ENCODE measurements at regions of chr9 and their contacts with region 1.

Region 1: DNA sequence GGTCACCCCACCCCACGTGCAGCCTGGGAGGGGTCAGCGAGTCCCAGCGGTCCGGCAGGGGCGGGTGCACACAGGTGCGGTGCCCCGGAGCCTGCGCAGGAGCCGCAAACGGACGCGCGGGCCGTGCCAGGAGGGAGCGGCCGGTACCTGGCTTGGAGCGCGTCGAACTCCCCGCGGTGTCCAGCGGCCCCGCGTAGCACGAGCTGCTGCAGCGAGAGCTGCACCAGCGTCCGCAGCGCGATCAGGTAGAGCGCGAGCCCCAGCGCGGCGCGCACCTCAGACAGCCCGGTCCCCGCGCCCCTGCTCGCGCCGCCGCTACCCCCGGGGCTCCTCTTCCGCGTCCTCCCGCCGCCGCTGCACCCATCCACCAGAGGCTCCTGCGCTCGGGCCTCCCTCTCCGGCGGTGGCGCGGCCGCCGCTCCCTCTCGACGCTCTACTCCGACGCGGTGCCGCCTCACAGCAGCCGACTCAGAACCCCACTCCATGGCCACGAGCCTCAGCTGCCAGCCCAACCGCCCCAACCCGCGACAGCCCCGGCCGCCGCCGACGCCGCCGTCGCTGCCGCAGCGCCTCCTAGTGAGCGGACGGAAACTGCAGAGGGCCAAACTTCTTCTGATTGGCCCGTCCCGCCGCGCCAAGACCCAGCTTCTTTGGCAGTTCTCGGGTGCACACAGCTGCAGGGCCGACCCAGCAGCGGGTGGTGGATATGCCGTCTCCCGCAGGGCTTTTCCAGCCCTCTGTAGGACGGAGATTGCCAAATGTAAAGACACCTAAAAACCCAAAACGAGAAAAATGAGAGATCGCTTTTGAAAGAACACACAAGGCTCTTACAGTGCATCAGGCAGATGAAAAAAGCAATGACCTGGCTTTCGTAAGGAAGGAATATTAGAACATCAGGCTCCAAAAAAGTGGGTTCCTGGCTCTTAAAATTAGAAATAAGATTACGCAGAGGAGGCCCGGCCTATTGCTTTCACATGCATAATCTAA is at the start of gene ERMP1:
- DNase-seq: peak; percentile 85
- total RNA-seq, gene ERMP1: 9.8 and 19.3 TPM in 2 replicates

Region 2: DNA sequence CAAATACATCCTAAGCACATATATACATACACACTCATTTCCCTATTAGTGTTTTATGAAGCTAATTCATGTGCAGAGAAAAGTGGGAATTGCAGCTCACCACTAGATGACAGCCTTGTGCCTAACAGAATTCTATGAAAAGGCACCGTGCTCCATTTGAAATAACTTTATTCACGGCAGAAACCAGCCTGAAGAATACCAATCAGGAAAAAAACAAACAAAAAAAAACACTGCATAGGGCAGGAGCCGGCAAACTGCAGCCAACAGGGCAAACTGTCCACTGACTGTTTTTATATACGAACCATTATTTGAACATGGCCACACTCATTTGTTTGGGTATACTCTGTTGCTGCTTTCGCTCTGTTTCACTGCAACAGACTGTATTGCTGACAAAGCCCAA is 33.5 kb before region 1 on chr9:
- in situ Hi-C with region 1: loop called (anchors 5 kb)
- DNase-seq: peak; percentile 66

Region 3: DNA sequence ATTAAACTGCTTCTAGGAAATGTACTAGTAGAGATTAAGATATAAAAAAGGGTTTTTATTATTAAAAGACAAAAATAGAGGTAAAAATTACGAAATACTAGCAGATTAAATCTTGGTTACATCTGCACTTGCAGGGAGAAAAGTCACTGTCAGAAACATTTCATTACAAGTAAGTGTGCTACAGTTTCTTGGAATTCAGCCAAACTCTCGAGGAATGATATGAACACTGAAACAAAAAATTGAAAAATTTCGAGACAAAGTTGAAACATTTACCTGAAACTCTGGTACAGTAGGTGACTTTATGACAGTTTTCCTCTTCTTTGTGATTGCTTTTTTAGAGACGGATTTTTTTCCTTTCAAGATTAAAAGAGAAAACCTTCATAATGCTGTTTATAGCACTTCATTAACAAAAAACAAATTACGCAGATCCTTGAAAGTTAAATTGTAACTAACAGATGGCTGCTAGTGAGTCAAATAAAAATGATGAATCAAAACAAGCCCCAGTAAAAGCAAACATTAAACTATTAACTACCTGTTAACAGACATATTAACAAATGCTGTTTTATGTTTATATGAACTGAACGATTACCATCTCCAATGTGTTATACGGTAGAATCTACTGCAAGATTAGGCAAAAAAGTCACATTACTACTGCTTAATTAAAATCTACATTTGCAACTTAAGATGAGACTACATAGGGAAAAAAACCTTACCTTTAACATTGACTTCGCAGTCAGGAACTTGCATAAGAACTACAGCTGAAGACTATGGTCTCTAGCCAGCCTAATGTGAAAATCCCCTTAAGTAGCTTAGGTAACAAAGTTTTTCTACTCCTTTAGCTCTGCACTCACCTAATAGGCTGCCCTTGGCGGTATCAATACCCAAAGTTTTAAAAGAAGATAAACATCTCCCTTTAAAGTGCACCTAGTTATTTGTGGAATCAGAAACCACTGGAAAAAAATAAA is 121.2 kb after region 1 on chr9:
- in situ Hi-C with region 1: no loop called
- DNase-seq: no peak

Measured in G401 (cell line).